ENCODE measurements at regions of chr15 and their contacts with region 1.

Region 1: GRCh38 chr15:60179786-60180391 is 175.8 kb downstream of the FOXB1 start:
- H3K4me3 Mint-ChIP-seq: no peak overlapping the region
- H3K27ac Mint-ChIP-seq: no peak overlapping the region
- H3K4me1 Mint-ChIP-seq: no peaks in the 10 kb centered on the region
- H3K27me3 Mint-ChIP-seq: peaks cover 9% of the 10 kb centered on the region

Region 2: DNA sequence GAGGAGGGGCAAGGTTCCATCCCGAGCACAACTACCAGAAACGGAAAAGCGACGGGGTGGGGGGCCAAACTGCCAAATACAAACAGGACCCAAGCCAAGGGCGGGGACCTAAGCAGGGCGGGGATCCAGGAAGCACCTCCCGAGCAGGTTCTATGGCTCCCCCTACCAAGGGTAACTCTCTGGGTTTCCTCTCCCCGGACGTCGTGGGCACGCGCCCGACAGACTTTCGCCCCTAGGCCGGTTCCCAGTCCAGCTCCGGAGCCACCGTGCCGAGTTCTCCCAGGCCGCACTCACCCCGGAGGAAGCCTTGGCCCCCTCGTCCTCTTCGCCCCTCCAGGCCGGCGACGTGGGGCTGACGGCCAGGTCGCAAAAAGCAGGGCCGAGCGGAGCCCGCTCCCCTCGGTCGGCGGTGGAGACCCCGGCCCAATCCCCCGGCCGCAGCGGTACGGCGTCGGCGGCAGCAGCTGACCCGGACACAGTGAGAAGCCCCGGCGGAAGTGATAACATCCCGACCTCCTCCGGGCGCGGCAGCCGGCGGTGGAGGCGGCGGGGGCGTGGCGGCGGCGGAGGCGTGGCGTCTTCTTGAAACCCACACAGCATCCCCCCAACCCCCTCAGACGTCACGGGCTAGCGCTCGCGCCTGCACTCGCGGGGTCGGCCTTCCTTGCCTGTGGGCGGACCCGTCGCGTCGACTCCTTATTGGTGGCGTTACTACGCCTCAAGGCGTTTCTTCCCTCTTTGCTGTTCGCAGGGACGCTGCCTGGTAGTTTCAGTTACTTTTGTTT is 490.9 kb before region 1 on chr15 and contains the start of gene BNIP2:
- intact Hi-C with region 1: loop called (anchors 2 kb)
- H3K4me3 Mint-ChIP-seq: peak within 1 kb of the TSS; percentile 89
- H3K27ac Mint-ChIP-seq: peak within 1 kb of the TSS; percentile 97
- H3K4me1 Mint-ChIP-seq: peaks cover 25% of the 10 kb centered on the region
- H3K27me3 Mint-ChIP-seq: no peaks in the 10 kb centered on the region

Region 3: GRCh38 chr15:59725172-59725486 is 454.8 kb before region 1 on chr15:
- intact Hi-C with region 1: loop called (anchors 10 kb)
- H3K4me3 Mint-ChIP-seq: no peak overlapping the region
- H3K27ac Mint-ChIP-seq: no peak overlapping the region
- H3K4me1 Mint-ChIP-seq: no peaks in the 10 kb centered on the region
- H3K27me3 Mint-ChIP-seq: no peaks in the 10 kb centered on the region

Region 4: DNA sequence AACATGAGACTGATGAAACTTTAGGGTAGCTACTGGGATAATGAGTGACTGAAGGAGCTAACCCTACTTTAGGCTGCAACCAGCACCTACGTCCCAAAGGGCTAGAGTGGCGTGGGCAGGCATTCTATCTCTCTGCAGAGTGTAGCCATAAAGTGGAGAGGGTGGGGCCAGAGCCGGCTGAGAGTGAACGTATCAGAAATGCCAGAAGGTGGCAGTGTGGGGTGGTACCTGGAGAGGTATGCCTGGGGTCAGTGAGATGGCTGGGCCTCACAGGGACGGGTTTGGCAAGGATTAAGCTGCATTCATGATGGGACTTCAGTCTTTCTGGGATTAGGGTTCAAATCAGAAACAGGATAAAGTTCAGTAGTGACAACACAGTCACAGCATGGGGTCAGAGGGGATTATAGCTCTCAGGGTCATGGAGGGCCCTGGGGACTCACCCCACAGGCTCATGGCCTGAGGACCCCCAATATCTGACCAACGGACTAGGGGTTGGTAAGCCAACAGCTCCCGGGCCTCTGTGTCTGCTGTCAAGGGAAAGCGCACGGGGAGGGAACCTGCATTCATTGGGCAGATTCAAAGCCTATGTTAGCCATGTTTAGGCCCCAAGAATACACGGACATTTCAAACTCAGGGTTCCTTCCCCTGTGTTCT is 262.3 kb before region 1 on chr15:
- intact Hi-C with region 1: loop called (anchors 2 kb)
- H3K4me3 Mint-ChIP-seq: no peak overlapping the region
- H3K27ac Mint-ChIP-seq: no peak overlapping the region
- H3K4me1 Mint-ChIP-seq: no peaks in the 10 kb centered on the region
- H3K27me3 Mint-ChIP-seq: peaks cover 9% of the 10 kb centered on the region

Measured in dendritic cell treated with granulocyte-macrophage colony-stimulating factor and Interleukin-4, amounts not matched to agents 40 ng/mL and 50 ng/mL, for 4 days (primary cell).